Right cardiac atrium (tissue), 5 donors: ENCODE measurements at regions of chr16 and their contacts with region 1.

Region 1: DNA sequence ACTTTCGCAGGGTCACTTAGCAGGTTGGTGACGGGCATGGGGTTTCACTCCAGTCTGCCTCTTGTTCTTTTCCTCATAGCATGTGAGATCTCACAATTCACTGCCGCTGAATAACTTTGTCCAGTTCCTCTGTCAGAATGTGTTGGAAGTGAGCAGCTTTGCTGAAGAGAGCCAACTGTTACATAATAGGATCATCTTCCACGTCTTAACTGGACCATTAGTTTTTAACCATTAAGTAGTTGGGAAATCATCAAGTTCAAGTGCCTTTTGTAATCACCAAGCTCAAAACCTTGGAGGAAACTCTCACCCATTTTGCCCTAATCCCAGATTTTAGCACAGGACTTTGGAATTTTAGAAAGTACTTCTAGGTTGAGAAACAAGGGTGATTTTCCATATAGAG is 290.6 kb downstream of the WWOX start:
- DNase-seq: no peak
- ATAC-seq: peak; percentile 42 to 66
- H3K4me3 ChIP-seq: no peak overlapping the region
- H3K27ac ChIP-seq: no peak overlapping the region
- H3K4me1 ChIP-seq: peaks cover 2% of the 10 kb centered on the region
- H3K27me3 ChIP-seq: no peaks in the 10 kb centered on the region

Region 2: DNA sequence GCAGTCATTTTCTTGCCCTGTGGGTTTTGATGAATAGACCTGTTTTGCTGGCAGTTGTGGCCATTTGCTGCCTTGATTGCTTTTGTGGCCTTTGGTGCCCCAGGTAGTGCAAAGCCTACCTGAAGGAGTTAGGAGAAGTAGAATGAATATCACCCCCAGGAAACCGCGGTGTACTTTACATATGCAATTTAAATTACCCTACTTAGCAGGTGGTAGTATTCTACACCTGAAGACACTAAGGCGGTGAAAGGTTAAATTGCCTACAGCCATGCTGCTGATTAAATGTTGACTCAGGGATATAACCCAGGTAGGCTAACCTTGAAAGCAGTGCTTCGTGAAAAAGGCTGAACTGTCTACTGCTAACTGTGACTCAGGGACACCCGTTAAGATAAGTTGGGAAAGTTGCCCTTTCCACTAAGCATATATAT is 317.8 kb before region 1 on chr16:
- intact Hi-C with region 1: loop called in 1 of 4 experiments (anchors 5 kb)
- DNase-seq: no peak
- ATAC-seq: no peak
- H3K4me3 ChIP-seq: no peak overlapping the region
- H3K27ac ChIP-seq: no peak overlapping the region
- H3K4me1 ChIP-seq: no peaks in the 10 kb centered on the region
- H3K27me3 ChIP-seq: no peaks in the 10 kb centered on the region

Region 3: GRCh38 chr16:78275420-78275819 is 114.7 kb before region 1 on chr16:
- intact Hi-C with region 1: no loop called
- DNase-seq: no peak
- ATAC-seq: no peak
- H3K4me3 ChIP-seq: no peak overlapping the region
- H3K27ac ChIP-seq: no peak overlapping the region
- H3K4me1 ChIP-seq: no peaks in the 10 kb centered on the region
- H3K27me3 ChIP-seq: no peaks in the 10 kb centered on the region

Region 4: DNA sequence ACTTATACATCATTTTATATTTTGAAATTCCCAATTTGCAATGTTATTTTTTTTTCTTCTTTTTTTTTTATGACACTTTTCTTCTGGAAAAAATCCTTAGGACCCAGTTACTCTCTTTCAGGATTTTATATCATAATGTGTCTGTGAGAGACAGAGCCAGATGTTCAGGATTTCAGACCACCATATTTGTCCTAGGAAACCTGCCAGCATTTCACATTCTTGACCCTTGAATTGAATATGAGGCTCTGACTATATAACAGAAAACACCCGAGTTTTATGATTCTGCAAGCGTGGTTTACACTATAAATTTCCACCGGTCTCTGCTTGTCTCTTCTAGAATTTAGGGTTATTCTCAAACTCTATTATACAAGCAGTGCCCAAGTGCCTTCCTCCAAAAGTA is 330.3 kb after region 1 on chr16:
- intact Hi-C with region 1: no loop called
- DNase-seq: no peak
- ATAC-seq: no peak
- H3K4me3 ChIP-seq: no peak overlapping the region
- H3K27ac ChIP-seq: no peak overlapping the region
- H3K4me1 ChIP-seq: no peaks in the 10 kb centered on the region
- H3K27me3 ChIP-seq: no peaks in the 10 kb centered on the region